GM18951 (cell line): ENCODE measurements at regions of chr1 and their contacts with region 1.

Region 1: DNA sequence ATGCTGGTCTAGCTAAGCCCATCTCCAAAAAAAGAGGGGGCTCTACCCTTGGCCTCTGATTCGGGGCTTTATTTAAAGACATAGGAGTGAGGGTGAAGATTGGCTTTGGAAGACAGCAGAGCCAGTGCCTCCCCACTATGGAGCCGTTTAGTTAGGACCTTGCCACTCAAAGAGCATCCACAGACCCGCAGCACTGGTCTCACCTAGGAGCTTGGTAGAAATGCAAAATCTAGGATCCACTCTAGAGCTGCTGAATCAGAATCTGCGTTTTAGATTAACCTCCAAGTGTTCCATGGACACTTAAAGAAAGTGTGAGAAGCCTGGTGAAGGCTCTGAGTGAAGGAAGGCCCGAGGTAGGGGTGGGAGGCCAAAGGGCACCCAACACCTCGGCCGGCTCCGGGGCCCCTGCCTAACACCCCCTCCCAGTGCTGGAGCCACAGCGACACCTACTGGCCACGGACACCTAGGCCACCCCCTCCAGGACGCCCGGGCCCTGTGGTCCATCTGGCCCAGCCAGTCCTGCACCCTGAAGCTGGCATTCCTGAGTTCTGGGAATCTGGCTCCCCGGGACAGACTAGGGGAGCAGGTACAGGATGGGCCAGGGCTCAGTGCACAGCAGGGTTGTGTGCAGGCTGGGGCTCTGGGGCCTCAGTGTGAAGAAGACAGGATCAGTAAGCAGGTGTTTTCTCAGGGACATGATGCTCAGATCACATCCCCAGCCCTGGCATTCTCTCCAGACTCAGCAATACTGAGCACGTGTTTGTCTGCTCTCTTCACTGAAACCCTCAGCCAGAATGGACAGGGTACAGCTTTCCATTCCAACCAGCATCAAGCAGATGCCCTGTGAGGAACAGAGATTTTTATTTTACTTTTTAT is 79.2 kb downstream of the TMEM53 start:
- POLR2A ChIP-seq: no peak

Region 2: DNA sequence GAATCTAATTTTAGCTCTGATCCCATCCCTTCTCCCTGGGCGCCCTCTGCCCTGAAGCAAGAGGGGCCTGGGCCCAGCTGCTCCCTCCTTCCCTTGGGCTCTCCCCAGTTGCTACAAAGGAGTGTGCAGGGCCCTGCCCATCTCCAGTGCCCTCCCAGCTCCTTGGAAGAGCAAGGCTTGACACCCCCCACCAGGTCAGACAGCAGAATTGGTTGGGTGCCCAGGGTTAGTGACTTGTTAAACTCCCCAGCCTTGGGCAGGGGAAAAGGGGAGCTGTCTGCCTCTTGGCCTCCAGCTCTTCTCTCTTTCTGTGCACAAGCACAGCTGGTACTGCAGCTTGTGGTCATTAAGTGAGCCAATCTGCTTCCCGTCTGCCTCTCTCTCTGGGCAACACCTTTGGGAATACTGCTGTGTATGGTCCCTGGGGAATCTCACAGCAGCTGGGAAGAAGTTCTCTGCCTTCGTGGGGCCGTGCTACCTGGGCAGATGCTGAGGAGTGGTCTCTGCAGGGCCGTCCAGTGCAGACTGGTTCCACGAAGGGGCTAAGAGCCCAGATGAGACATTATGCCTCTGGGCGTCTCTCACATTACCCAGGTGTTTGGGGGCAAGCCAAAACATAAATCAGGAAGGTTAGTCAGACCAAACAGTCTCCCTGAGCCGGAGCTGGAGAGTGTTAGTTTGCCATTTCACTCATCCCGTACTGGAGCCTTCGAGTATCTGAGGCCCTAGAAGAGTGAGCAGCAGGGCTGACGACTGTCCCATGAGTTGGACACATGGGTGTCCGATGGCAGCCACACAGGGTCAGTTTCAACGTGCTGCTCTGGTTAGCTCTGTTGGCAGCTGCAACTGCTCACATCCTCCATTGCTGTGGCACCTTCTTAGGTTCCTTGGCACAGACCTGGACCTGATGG is 41.8 kb after region 1 on chr1:
- in situ Hi-C with region 1: loop called (anchors 5 kb)
- POLR2A ChIP-seq: no peak